Esophagus muscularis mucosa (tissue), 4 donors: ENCODE measurements at regions of chr2 and their contacts with region 1.

Region 1: GRCh38 chr2:168254158-168254935 is 7.0 kb upstream of the STK39 start:
- DNase-seq: peak; percentile 4
- H3K4me3 ChIP-seq: no peak overlapping the region
- H3K27ac ChIP-seq: no peak overlapping the region
- H3K4me1 ChIP-seq: peaks cover 0 to 6% (median 5%) of the 10 kb centered on the region in 4 donors
- H3K27me3 ChIP-seq: no peaks in the 10 kb centered on the region
- CTCF ChIP-seq: no peak
- EP300 ChIP-seq: no peak
- POLR2A ChIP-seq: no peak

Region 2: GRCh38 chr2:167783261-167784075 is 470.9 kb before region 1 on chr2:
- intact Hi-C with region 1: no loop called
- DNase-seq: no peak
- H3K4me3 ChIP-seq: no peak overlapping the region
- H3K27ac ChIP-seq: no peak overlapping the region
- H3K4me1 ChIP-seq: no peaks in the 10 kb centered on the region
- H3K27me3 ChIP-seq: no peaks in the 10 kb centered on the region
- CTCF ChIP-seq: no peak
- EP300 ChIP-seq: no peak
- POLR2A ChIP-seq: no peak

Region 3: GRCh38 chr2:167916756-167917155 is 337.6 kb before region 1 on chr2:
- intact Hi-C with region 1: no loop called
- DNase-seq: no peak
- H3K4me3 ChIP-seq: no peak overlapping the region
- H3K27ac ChIP-seq: no peak overlapping the region
- H3K4me1 ChIP-seq: no peaks in the 10 kb centered on the region
- H3K27me3 ChIP-seq: no peaks in the 10 kb centered on the region
- CTCF ChIP-seq: no peak
- EP300 ChIP-seq: no peak
- POLR2A ChIP-seq: no peak

Region 4: GRCh38 chr2:168336864-168337263 is 82.5 kb after region 1 on chr2:
- intact Hi-C with region 1: loop called (anchors 10 kb)
- DNase-seq: peak; percentile 88
- H3K4me3 ChIP-seq: no peak overlapping the region
- H3K27ac ChIP-seq: no peak overlapping the region
- H3K4me1 ChIP-seq: no peaks in the 10 kb centered on the region
- H3K27me3 ChIP-seq: no peaks in the 10 kb centered on the region
- CTCF ChIP-seq: peak; percentile 41 to 50 (median 45)
- EP300 ChIP-seq: no peak
- POLR2A ChIP-seq: no peak

Region 5: DNA sequence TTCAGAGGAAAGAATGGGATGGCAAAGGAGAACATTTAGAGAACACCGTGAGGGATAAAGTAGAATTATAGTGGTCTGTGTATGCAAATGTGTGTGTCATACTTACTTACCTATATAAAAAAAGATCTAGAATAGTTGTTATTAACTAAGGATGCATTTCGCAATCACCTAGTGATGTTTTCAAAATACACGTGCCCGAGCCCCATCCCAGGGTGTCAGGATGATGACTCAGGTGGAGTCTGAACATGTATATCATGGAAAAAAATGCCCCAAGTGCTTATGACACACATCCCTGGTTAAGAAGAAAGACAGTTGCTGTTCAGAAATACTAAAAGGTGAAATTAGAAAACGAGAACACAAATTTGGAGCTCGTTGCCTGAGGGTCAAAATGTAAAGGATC is 310.8 kb after region 1 on chr2:
- intact Hi-C with region 1: no loop called
- DNase-seq: no peak
- H3K4me3 ChIP-seq: no peak overlapping the region
- H3K27ac ChIP-seq: no peak overlapping the region
- H3K4me1 ChIP-seq: peaks cover 54 to 60% (median 58%) of the 10 kb centered on the region in 4 donors
- H3K27me3 ChIP-seq: no peaks in the 10 kb centered on the region
- CTCF ChIP-seq: no peak
- EP300 ChIP-seq: no peak
- POLR2A ChIP-seq: no peak